Activated CD4-positive, alpha-beta memory T cell treated with anti-CD3 and anti-CD28 coated beads for 36 hours (primary cell): ENCODE measurements at regions of chr16 and their contacts with region 1.

Region 1: DNA sequence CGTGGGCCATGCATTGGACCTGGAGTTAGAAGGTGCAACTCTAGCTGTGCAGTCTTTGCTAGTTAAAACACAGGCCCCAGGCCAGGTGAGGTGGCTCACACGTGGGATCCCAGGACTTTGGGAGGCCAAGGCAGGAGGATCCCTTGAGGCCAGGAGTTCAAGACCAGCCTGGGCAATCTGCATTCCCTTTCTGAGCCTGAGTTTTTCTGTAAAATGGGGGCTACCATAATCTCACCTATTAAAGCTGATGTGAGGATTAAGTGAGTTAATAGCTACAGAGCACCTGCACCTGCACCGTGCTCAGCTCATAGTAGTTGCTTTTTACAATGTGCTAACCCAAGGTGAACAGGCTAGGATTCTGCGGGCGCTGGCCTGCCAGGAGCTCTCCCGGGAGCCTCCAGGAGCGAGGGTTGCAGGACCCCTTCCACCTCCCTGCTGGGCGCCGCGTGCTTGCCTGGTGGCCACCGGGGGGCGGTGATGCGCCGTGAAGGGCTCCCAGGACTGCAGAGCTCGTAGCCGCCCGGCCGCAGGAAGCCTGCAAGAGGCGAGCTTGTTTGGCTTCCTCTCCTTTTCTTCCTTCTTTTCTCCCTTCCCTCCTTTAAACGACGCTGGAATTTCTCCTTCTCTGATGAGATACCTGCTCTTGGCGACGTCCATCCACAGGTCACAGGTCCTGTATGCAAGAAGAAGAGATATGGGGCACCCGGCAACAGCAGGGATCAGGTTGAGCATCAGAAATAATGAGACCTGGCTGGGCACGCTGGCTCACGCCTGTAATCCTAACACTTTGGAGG is 51.3 kb downstream of the ZFP90 start:
- DNase-seq: peak; percentile 83
- H3K4me3 Mint-ChIP-seq: no peak overlapping the region
- H3K27ac Mint-ChIP-seq: no peak overlapping the region
- H3K4me1 Mint-ChIP-seq: peaks cover 2% of the 10 kb centered on the region
- H3K27me3 Mint-ChIP-seq: peaks cover 1% of the 10 kb centered on the region

Region 2: DNA sequence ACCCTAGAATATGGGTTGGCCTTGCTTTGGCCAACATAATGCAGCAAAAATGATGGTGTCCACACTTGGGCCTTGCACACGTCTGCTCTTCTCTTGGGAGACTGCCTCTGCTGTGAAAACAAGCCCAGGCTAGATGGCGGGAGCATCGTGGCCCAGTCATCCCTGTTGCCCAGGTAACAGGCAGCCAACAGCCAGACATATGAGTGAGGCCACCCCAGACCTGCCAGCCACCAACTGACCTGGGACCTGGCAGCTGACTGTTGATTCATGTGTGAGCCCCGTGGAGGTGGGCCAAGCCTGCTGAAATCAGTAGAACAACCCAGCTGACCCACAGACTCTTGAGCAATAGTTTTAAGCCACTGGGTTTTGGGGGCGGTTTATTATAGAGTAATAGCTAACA is 15.3 kb after region 1 on chr16:
- CTCF ChIA-PET with region 1: interaction called, 12 read pairs
- POLR2A ChIA-PET with region 1: interaction called, 3 read pairs
- intact Hi-C with region 1: no loop called
- DNase-seq: no peak
- H3K4me3 Mint-ChIP-seq: no peak overlapping the region
- H3K27ac Mint-ChIP-seq: no peak overlapping the region
- H3K4me1 Mint-ChIP-seq: no peaks in the 10 kb centered on the region
- H3K27me3 Mint-ChIP-seq: no peaks in the 10 kb centered on the region

Region 3: GRCh38 chr16:68800257-68800875 is 210.0 kb after region 1 on chr16:
- CTCF ChIA-PET with region 1: interaction called, 53 read pairs
- POLR2A ChIA-PET with region 1: interaction called, 3 read pairs
- intact Hi-C with region 1: loop called (anchors 2 kb)
- DNase-seq: peak; percentile 81
- H3K4me3 Mint-ChIP-seq: no peak overlapping the region
- H3K27ac Mint-ChIP-seq: no peak overlapping the region
- H3K4me1 Mint-ChIP-seq: peaks cover 7% of the 10 kb centered on the region
- H3K27me3 Mint-ChIP-seq: peaks cover 2% of the 10 kb centered on the region

Region 4: GRCh38 chr16:68843482-68844210 is 253.2 kb after region 1 on chr16 and contains the start of gene TANGO6:
- CTCF ChIA-PET with region 1: interaction called, 14 read pairs
- POLR2A ChIA-PET with region 1: no interaction called
- intact Hi-C with region 1: loop called (anchors 5 kb)
- DNase-seq: peak; percentile 96
- H3K4me3 Mint-ChIP-seq: peak within 1 kb of the TSS; percentile 95
- H3K27ac Mint-ChIP-seq: peak within 1 kb of the TSS; percentile 85
- H3K4me1 Mint-ChIP-seq: peaks cover 25% of the 10 kb centered on the region
- H3K27me3 Mint-ChIP-seq: no peaks in the 10 kb centered on the region
- total RNA-seq, gene TANGO6: 25.2 to 25.7 TPM